Caco-2 (cell line): ENCODE measurements at regions of chr14 and their contacts with region 1.

Region 1: GRCh38 chr14:96567289-96567899 is 65.2 kb downstream of the PAPOLA start:
- DNase-seq: no peak
- H3K4me3 ChIP-seq: no peak overlapping the region
- H3K4me3 Mint-ChIP-seq: no peak overlapping the region
- H3K27ac Mint-ChIP-seq: no peak overlapping the region
- H3K4me1 ChIP-seq: no peaks in the 10 kb centered on the region
- H3K4me1 Mint-ChIP-seq: no peaks in the 10 kb centered on the region
- H3K27me3 ChIP-seq: no peaks in the 10 kb centered on the region
- H3K27me3 Mint-ChIP-seq: no peaks in the 10 kb centered on the region
- CTCF ChIP-seq: peak; percentile 30 to 47

Region 2: DNA sequence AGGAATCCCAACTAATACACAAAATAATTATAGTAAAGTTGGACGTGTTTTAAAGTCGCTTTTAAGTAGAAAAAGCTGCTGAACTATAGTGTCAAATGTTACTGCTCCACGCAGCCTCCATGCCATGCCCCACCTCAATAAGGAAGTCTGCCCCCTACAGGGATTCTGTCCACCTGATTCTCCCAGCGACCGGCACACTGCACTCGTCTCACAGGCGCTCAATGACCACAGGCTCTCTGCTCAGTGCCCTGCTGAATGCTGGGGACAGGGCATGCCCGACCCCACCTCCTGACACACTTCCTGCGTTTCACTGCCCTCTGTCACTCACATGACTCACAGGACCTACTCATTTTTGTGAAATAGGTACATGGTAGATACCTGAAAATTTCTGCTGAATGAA is 262.4 kb before region 1 on chr14:
- CTCF ChIA-PET with region 1: no interaction called
- POLR2A ChIA-PET with region 1: no interaction called
- intact Hi-C with region 1: loop called (anchors 10 kb)
- DNase-seq: no peak
- H3K4me3 ChIP-seq: no peak overlapping the region
- H3K4me3 Mint-ChIP-seq: no peak overlapping the region
- H3K27ac Mint-ChIP-seq: no peak overlapping the region
- H3K4me1 ChIP-seq: peaks cover 20% of the 10 kb centered on the region
- H3K4me1 Mint-ChIP-seq: peaks cover 14% of the 10 kb centered on the region
- H3K27me3 ChIP-seq: no peaks in the 10 kb centered on the region
- H3K27me3 Mint-ChIP-seq: no peaks in the 10 kb centered on the region
- CTCF ChIP-seq: no peak

Region 3: GRCh38 chr14:96416292-96416691 is 151.1 kb before region 1 on chr14:
- CTCF ChIA-PET with region 1: no interaction called
- POLR2A ChIA-PET with region 1: no interaction called
- intact Hi-C with region 1: no loop called
- DNase-seq: no peak
- H3K4me3 ChIP-seq: no peak overlapping the region
- H3K4me3 Mint-ChIP-seq: no peak overlapping the region
- H3K27ac Mint-ChIP-seq: no peak overlapping the region
- H3K4me1 ChIP-seq: no peaks in the 10 kb centered on the region
- H3K4me1 Mint-ChIP-seq: no peaks in the 10 kb centered on the region
- H3K27me3 ChIP-seq: no peaks in the 10 kb centered on the region
- H3K27me3 Mint-ChIP-seq: no peaks in the 10 kb centered on the region
- CTCF ChIP-seq: no peak

Region 4: GRCh38 chr14:96445844-96446710 is 121.3 kb before region 1 on chr14:
- CTCF ChIA-PET with region 1: no interaction called
- POLR2A ChIA-PET with region 1: no interaction called
- intact Hi-C with region 1: no loop called
- DNase-seq: peak; percentile 68 to 79
- H3K4me3 ChIP-seq: peak overlapping the region; percentile 15; the same call in 1 of the 2 replicates
- H3K4me3 Mint-ChIP-seq: peak overlapping the region; percentile 70
- H3K27ac Mint-ChIP-seq: peak overlapping the region; percentile 74
- H3K4me1 ChIP-seq: peaks cover 30% of the 10 kb centered on the region
- H3K4me1 Mint-ChIP-seq: peaks cover 10% of the 10 kb centered on the region
- H3K27me3 ChIP-seq: no peaks in the 10 kb centered on the region
- H3K27me3 Mint-ChIP-seq: no peaks in the 10 kb centered on the region
- CTCF ChIP-seq: no peak

Region 5: DNA sequence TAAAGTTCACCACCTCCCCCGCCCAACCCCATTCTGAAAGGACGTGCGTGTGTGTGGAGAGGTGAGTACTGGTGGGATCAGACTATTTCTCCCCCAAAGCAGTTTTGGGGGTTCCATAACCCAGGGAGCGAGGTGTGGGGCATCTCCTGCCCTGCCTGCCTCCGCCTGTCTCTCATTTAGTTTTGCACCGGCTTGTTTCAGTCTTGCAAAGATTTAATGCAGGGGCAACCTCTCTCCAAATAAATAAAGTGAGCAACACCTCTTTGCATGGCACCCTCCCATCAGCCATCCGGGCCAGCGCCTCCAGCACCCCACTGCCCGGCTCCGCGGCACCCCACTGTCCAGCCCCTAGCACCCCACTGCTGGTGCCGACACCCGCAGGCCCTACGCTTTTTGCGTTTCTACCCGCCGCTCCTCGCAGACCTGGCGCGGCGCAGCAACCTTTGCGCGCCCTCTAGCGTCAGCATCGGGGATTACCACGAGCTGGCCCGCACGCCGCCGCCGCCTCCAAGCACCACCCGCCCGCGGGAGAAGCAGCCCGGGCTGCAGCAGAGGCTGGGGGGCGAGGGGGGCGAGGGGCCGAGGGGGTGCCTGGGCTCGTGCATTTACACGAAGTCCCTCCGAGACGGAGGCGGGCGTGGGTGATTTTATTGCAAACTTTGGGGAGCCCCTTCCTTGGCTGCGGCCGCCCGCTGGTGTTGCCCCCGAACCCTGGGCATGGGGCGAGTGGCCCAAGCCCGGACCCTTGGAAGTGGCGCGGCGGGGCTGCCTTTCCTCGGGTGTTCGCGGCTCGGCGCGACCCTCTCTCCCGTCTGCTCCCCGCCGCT is 174.0 kb after region 1 on chr14:
- CTCF ChIA-PET with region 1: no interaction called
- POLR2A ChIA-PET with region 1: no interaction called
- intact Hi-C with region 1: loop called (anchors 5 kb)
- DNase-seq: peak; percentile 46 to 81
- H3K4me3 ChIP-seq: peak overlapping the region; percentile 34
- H3K4me3 Mint-ChIP-seq: peak overlapping the region; percentile 61
- H3K27ac Mint-ChIP-seq: no peak overlapping the region
- H3K4me1 ChIP-seq: no peaks in the 10 kb centered on the region
- H3K4me1 Mint-ChIP-seq: no peaks in the 10 kb centered on the region
- H3K27me3 ChIP-seq: peaks cover 5% of the 10 kb centered on the region; the same call in 1 of the 2 replicates
- H3K27me3 Mint-ChIP-seq: peaks cover 39% of the 10 kb centered on the region
- CTCF ChIP-seq: peak; percentile 83 to 90